ENCODE measurements at regions of chr3 and their contacts with region 1.

Region 1: DNA sequence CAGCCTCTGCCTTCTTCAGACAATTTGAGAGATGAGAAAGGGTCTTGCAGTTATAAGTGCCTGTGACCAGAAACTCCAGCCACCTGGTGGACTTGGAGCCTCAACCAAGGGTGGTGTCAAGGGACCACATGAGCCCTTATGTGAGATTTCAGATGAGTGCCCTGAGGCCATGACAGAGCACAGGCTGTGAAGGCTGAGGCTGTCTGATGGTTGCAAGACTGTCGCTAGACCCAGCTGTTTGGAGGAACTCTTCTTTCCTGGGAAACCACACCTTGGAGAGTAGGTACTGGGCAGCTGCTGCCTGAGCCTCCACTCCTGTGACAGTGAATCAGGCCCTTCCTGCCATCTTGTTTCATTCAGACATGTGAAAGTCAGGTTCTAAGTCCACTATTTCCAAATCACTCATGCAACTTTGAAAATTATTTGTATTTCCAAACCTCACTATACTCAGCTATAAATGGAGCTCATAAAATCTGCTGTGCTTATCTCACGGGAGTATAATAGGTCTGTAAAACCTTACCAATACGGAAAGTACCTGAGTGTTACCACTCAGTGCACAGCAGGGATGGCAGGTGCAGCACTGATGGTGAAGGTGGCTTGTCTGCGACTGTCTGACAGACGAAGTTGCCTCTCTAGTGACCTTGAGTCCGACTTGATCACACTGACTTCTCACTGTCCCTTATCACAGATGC is 99.4 kb downstream of the RPL39L start:
- H3K4me3 Mint-ChIP-seq: no peak overlapping the region
- H3K27ac Mint-ChIP-seq: peak overlapping the region; percentile 53
- H3K4me1 Mint-ChIP-seq: peaks cover 61% of the 10 kb centered on the region
- H3K27me3 Mint-ChIP-seq: no peaks in the 10 kb centered on the region

Region 2: GRCh38 chr3:186985661-186986364 is 54.1 kb before region 1 on chr3:
- intact Hi-C with region 1: loop called (anchors 10 kb)
- H3K4me3 Mint-ChIP-seq: peak overlapping the region; percentile 61
- H3K27ac Mint-ChIP-seq: peak overlapping the region; percentile 85
- H3K4me1 Mint-ChIP-seq: peaks cover 64% of the 10 kb centered on the region
- H3K27me3 Mint-ChIP-seq: no peaks in the 10 kb centered on the region